ENCODE measurements at regions of chr15 and their contacts with region 1.

Region 1: GRCh38 chr15:39799552-39800011 is 16.9 kb upstream of the FSIP1 start:
- DNase-seq: no peak
- H3K4me3 ChIP-seq: no peak overlapping the region
- H3K27ac ChIP-seq: no peak overlapping the region
- H3K4me1 ChIP-seq: no peaks in the 10 kb centered on the region
- H3K27me3 ChIP-seq: no peaks in the 10 kb centered on the region
- CTCF ChIP-seq: no peak
- POLR2A ChIP-seq: no peak

Region 2: GRCh38 chr15:39874890-39875549 is 75.4 kb after region 1 on chr15:
- intact Hi-C with region 1: loop called (anchors 10 kb)
- DNase-seq: peak; percentile 21 to 43
- H3K4me3 ChIP-seq: no peak overlapping the region
- H3K27ac ChIP-seq: no peak overlapping the region
- H3K4me1 ChIP-seq: no peaks in the 10 kb centered on the region
- H3K27me3 ChIP-seq: no peaks in the 10 kb centered on the region
- CTCF ChIP-seq: peak in 5 of 6 experiments; percentile 20 to 60 (median 38)
- POLR2A ChIP-seq: no peak

Measured in thyroid gland (tissue), 4 donors.